GM10248 (cell line): ENCODE measurements at regions of chr18 and their contacts with region 1.

Region 1: GRCh38 chr18:55365342-55365741 is 222.7 kb downstream of the TCF4 start:
- DNase-seq: no peak
- CTCF ChIP-seq: no peak

Region 2: DNA sequence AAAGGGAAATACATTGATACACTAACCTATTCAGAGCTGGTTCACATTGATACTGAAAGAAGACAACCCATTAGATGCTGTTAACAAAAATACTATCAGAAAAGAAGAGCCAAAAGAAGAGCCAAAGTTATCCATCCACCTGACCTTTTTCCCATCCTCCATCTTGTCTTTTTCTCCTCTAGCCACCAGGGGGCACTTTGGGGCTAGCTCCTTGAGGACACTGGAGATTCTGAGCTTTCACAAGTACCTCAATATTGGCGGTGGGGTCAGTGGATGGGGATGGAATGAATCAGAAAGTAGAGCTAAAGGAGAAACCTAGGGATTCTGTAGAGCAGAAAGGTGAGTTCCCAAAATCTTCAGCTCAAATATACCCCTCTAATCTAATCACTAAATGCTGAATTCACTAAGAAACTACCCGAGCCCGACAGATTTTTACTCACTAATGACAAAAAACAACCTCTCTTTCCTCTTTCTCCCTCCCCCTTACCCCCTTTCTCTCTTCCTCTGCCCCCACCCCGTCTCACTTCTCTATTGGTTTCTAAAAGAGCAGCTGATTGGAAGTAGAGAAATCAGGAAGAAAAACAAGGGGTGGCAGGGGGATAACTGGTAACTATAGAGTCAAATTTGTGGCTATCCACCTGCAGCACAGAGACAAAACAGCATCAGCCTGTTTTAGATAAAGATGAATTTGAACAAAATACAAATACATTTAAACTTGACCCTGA is 19.4 kb after region 1 on chr18:
- CTCF ChIA-PET with region 1: interaction called, 11 read pairs
- POLR2A ChIA-PET with region 1: no interaction called
- DNase-seq: peak; percentile 32
- CTCF ChIP-seq: peak; percentile 43

Region 3: GRCh38 chr18:55546851-55547704 is 181.7 kb after region 1 on chr18:
- CTCF ChIA-PET with region 1: no interaction called
- POLR2A ChIA-PET with region 1: no interaction called
- DNase-seq: no peak
- CTCF ChIP-seq: no peak